CD8-positive, alpha-beta memory T cell (primary cell): ENCODE measurements at regions of chr11 and their contacts with region 1.

Region 1: GRCh38 chr11:117807482-117808327 is 10.7 kb upstream of the DSCAML1 start:
- DNase-seq: peak; percentile 48 to 82 (median 73)
- H3K4me3 ChIP-seq: no peak overlapping the region
- H3K4me3 Mint-ChIP-seq: no peak overlapping the region
- H3K27ac ChIP-seq: no peak overlapping the region
- H3K27ac Mint-ChIP-seq: peak overlapping the region in 3 of 8 donors; percentile 33 to 92 (median 71)
- H3K4me1 ChIP-seq: peaks cover 4% of the 10 kb centered on the region
- H3K4me1 Mint-ChIP-seq: peaks cover 7 to 13% (median 11%) of the 10 kb centered on the region in 3 donors
- H3K27me3 ChIP-seq: no peaks in the 10 kb centered on the region
- H3K27me3 Mint-ChIP-seq: peaks cover 0 to 2% of the 10 kb centered on the region in 2 donors

Region 2: DNA sequence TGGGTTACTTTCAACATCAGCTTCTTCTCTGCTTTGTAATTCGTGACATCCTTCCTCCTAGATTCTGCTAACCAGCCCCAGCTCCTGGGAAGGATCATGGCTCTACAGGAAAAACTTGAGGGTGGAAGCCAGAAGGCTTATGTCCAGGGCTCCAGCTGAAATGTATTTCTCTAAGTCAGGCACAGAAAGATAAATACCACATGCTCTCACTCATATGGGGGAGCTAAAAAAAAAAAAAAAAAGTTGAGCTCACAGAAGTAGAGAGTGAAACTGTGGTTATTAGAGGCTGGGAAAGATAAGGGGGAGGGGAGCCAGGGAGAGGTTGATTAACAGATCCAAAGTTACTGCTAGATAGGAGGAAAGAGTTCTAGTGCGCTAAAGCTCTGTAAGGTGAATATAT is 85.6 kb before region 1 on chr11:
- CTCF ChIA-PET with region 1: no interaction called
- POLR2A ChIA-PET with region 1: no interaction called
- DNase-seq: no peak
- H3K4me3 ChIP-seq: no peak overlapping the region
- H3K4me3 Mint-ChIP-seq: no peak overlapping the region
- H3K27ac ChIP-seq: no peak overlapping the region
- H3K27ac Mint-ChIP-seq: no peak overlapping the region
- H3K4me1 ChIP-seq: no peaks in the 10 kb centered on the region
- H3K4me1 Mint-ChIP-seq: no peaks in the 10 kb centered on the region
- H3K27me3 ChIP-seq: no peaks in the 10 kb centered on the region
- H3K27me3 Mint-ChIP-seq: peaks cover 18 to 22% of the 10 kb centered on the region in 2 donors

Region 3: DNA sequence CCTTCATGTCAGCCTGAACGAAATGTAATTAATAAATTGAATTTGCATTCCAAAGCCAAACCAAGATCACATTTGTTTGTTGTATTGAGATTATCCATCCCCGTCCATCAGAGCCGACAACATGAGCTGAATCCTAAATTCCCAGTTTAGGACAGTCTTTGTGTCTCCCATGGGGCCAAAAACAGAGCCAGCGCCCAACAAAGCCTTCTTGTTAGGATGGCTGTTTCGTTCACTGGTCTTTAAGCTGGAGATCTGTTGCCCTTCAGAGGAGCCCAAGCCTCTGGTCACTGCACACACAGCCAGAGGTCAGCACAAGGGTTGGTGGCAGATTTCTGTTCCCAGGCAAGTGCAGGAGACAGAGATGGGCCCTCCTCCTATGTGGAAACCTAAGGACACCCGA is 36.5 kb before region 1 on chr11:
- CTCF ChIA-PET with region 1: no interaction called
- POLR2A ChIA-PET with region 1: no interaction called
- DNase-seq: no peak
- H3K4me3 ChIP-seq: no peak overlapping the region
- H3K4me3 Mint-ChIP-seq: no peak overlapping the region
- H3K27ac ChIP-seq: no peak overlapping the region
- H3K27ac Mint-ChIP-seq: peak overlapping the region in 1 of 8 donors; percentile 43
- H3K4me1 ChIP-seq: no peaks in the 10 kb centered on the region
- H3K4me1 Mint-ChIP-seq: no peaks in the 10 kb centered on the region
- H3K27me3 ChIP-seq: no peaks in the 10 kb centered on the region
- H3K27me3 Mint-ChIP-seq: peaks cover 5 to 8% of the 10 kb centered on the region in 2 donors

Region 4: GRCh38 chr11:117796872-117797529 is 10.7 kb before region 1 on chr11 and contains the start of gene DSCAML1:
- CTCF ChIA-PET with region 1: interaction called, 20 read pairs
- POLR2A ChIA-PET with region 1: interaction called, 3 read pairs
- DNase-seq: peak in 2 of 5 donors; percentile 28 to 65
- H3K4me3 ChIP-seq: peak within 1 kb of the TSS; percentile 12
- H3K4me3 Mint-ChIP-seq: peak within 1 kb of the TSS; percentile 21 to 88 (median 65)
- H3K27ac ChIP-seq: no peak within 1 kb of the TSS
- H3K27ac Mint-ChIP-seq: peak within 1 kb of the TSS in 1 of 8 donors; percentile 22
- H3K4me1 ChIP-seq: peaks cover 18% of the 10 kb centered on the region
- H3K4me1 Mint-ChIP-seq: peaks cover 0 to 22% (median 14%) of the 10 kb centered on the region in 3 donors
- H3K27me3 ChIP-seq: peaks cover 42% of the 10 kb centered on the region
- H3K27me3 Mint-ChIP-seq: peaks cover 47 to 52% of the 10 kb centered on the region in 2 donors
- total RNA-seq, gene DSCAML1: 0.48 to 0.91 TPM

Region 5: DNA sequence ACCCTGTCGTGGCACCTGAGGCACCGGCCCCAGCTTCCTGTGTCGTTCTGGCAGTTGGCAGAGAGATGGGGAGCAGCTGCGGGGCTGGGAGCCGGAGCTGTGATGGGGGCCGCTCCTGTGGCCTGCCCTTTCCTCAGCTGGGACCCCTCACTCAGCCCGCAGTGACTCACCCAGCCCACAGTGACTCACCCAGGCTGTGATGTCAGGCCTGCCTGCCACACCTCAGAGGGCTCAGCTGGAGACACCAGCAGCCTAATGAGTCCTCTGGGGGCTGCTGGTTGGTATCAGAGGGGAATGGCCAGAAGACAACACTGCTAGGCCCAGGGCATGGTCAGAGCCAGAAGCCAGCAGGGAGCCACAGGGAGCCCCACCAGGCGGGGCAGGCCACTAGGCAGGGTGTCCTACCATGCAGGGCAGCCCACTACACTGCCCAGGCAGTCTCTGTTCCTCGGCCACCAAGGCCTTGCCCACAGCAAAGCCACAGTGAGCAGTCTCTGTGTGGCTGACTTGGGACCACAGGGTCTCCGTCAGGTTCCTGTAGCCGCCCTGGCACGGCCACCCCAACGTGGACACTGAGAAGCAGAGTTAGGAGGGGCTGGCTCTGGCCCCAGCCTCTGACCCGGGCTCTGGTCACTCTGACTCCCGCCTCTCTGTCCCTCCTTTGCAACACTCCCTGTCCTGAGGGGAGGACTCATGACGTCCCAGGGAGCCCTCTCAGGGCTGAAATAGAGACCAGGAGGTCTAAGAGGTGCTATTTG is 21.1 kb after region 1 on chr11:
- CTCF ChIA-PET with region 1: interaction called, 248 read pairs
- POLR2A ChIA-PET with region 1: no interaction called
- DNase-seq: peak; percentile 51 to 95 (median 71)
- H3K4me3 ChIP-seq: no peak overlapping the region
- H3K4me3 Mint-ChIP-seq: peak overlapping the region; percentile 7 to 89 (median 57)
- H3K27ac ChIP-seq: peak overlapping the region; percentile 21
- H3K27ac Mint-ChIP-seq: peak overlapping the region; percentile 88 to 97 (median 94)
- H3K4me1 ChIP-seq: peaks cover 46% of the 10 kb centered on the region
- H3K4me1 Mint-ChIP-seq: peaks cover 65 to 83% (median 67%) of the 10 kb centered on the region in 3 donors
- H3K27me3 ChIP-seq: no peaks in the 10 kb centered on the region
- H3K27me3 Mint-ChIP-seq: peaks cover 0 to 2% of the 10 kb centered on the region in 2 donors

Region 6: GRCh38 chr11:117861151-117862018 is 53.7 kb after region 1 on chr11:
- CTCF ChIA-PET with region 1: no interaction called
- POLR2A ChIA-PET with region 1: no interaction called
- DNase-seq: no peak
- H3K4me3 ChIP-seq: no peak overlapping the region
- H3K4me3 Mint-ChIP-seq: no peak overlapping the region
- H3K27ac ChIP-seq: no peak overlapping the region
- H3K27ac Mint-ChIP-seq: peak overlapping the region in 2 of 8 donors; percentile 61 to 70
- H3K4me1 ChIP-seq: no peaks in the 10 kb centered on the region
- H3K4me1 Mint-ChIP-seq: no peaks in the 10 kb centered on the region
- H3K27me3 ChIP-seq: no peaks in the 10 kb centered on the region
- H3K27me3 Mint-ChIP-seq: peaks cover 3 to 19% of the 10 kb centered on the region in 2 donors

Region 7: GRCh38 chr11:118171269-118172062 is 363.8 kb after region 1 on chr11:
- CTCF ChIA-PET with region 1: interaction called, 11 read pairs
- POLR2A ChIA-PET with region 1: no interaction called
- DNase-seq: peak; percentile 51 to 76 (median 62)
- H3K4me3 ChIP-seq: no peak overlapping the region
- H3K4me3 Mint-ChIP-seq: no peak overlapping the region
- H3K27ac ChIP-seq: no peak overlapping the region
- H3K27ac Mint-ChIP-seq: peak overlapping the region in 1 of 8 donors; percentile 19
- H3K4me1 ChIP-seq: peaks cover 8% of the 10 kb centered on the region
- H3K4me1 Mint-ChIP-seq: peaks cover 0 to 4% (median 4%) of the 10 kb centered on the region in 3 donors
- H3K27me3 ChIP-seq: no peaks in the 10 kb centered on the region
- H3K27me3 Mint-ChIP-seq: peaks cover 11 to 22% of the 10 kb centered on the region in 2 donors